Right ventricle myocardium superior (tissue), 1 donor: ENCODE measurements at regions of chr14 and their contacts with region 1.

Region 1: DNA sequence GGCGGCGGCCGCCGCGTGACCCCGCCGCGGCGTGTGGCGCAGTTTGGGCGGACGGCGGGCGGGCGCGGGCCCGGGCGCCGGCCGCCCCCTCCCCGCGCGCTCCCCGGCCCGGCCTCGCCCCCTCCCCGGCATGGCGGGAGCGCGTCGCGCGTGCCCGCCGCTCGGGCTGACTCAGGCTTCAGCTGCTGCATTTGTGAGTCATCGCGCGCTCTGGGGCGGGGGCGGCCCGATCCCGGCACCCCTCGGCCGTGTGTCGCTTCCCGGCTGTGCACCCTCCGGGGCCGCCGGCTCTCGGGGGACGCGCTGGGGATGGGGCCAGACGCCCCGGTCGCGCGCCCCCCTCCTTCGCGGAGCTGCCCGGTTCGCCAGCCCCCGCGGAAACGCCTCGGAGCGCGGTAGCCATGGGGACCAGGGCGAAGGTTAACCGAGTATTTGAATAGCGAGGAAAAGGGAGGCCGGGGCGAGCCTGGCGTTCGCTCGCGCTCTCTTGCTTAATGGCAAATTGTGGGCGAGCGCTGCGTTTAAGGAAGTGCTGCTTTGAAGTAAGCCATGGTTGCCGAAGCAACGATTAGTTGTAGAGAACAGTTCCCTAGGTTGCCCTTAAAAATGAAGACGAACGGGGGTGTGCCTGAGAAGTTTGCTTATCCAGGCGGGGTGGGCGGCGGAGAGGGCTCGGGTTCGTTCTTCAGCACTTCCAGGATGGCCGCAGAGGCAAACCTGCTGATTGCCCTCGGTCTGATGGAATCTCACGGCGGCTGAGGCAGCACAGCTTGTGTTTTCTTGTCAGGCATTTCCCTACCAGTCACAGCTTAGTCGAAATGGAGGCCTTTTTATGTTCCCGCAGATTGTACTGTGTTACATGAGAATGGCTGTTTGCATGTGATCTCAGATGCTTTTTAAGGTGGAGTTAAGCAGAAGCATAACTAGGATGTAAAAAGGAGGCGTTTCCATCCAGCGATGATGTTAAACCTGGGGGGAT is 896 bp downstream of the EIF5 start:
- DNase-seq: peak; percentile 71
- ATAC-seq: peak; percentile 30

Region 2: GRCh38 chr14:103121846-103122584 is 212.9 kb before region 1 on chr14:
- intact Hi-C with region 1: no loop called
- DNase-seq: peak; percentile 95
- ATAC-seq: peak; percentile 59

Region 3: GRCh38 chr14:103385152-103385993 is 50.4 kb after region 1 on chr14 and contains the start of gene MARK3:
- intact Hi-C with region 1: loop called (anchors 5 kb)
- DNase-seq: peak; percentile 99
- ATAC-seq: peak; percentile 96
- total RNA-seq, gene MARK3: 137 TPM